ENCODE measurements at regions of chr11 and their contacts with region 1.

Region 1: GRCh38 chr11:130131961-130132850 is 27.4 kb upstream of the ST14 start:
- DNase-seq: peak; percentile 37
- H3K4me3 ChIP-seq: no peak overlapping the region
- H3K27ac ChIP-seq: no peak overlapping the region
- H3K27me3 ChIP-seq: no peaks in the 10 kb centered on the region
- CTCF ChIP-seq: peak; percentile 88

Region 2: GRCh38 chr11:129881570-129882170 is 250.5 kb before region 1 on chr11:
- CTCF ChIA-PET with region 1: interaction called, 43 read pairs
- POLR2A ChIA-PET with region 1: interaction called, 5 read pairs
- DNase-seq: no peak
- H3K4me3 ChIP-seq: no peak overlapping the region
- H3K27ac ChIP-seq: no peak overlapping the region
- H3K27me3 ChIP-seq: no peaks in the 10 kb centered on the region
- CTCF ChIP-seq: peak; percentile 70

Region 3: GRCh38 chr11:129911298-129911697 is 220.9 kb before region 1 on chr11:
- CTCF ChIA-PET with region 1: interaction called, 395 read pairs
- POLR2A ChIA-PET with region 1: no interaction called
- DNase-seq: no peak
- H3K4me3 ChIP-seq: no peak overlapping the region
- H3K27ac ChIP-seq: no peak overlapping the region
- H3K27me3 ChIP-seq: no peaks in the 10 kb centered on the region
- CTCF ChIP-seq: no peak

Region 4: GRCh38 chr11:129935723-129936122 is 196.5 kb before region 1 on chr11:
- CTCF ChIA-PET with region 1: interaction called, 395 read pairs
- POLR2A ChIA-PET with region 1: no interaction called
- DNase-seq: no peak
- H3K4me3 ChIP-seq: no peak overlapping the region
- H3K27ac ChIP-seq: no peak overlapping the region
- H3K27me3 ChIP-seq: no peaks in the 10 kb centered on the region
- CTCF ChIP-seq: no peak

Region 5: DNA sequence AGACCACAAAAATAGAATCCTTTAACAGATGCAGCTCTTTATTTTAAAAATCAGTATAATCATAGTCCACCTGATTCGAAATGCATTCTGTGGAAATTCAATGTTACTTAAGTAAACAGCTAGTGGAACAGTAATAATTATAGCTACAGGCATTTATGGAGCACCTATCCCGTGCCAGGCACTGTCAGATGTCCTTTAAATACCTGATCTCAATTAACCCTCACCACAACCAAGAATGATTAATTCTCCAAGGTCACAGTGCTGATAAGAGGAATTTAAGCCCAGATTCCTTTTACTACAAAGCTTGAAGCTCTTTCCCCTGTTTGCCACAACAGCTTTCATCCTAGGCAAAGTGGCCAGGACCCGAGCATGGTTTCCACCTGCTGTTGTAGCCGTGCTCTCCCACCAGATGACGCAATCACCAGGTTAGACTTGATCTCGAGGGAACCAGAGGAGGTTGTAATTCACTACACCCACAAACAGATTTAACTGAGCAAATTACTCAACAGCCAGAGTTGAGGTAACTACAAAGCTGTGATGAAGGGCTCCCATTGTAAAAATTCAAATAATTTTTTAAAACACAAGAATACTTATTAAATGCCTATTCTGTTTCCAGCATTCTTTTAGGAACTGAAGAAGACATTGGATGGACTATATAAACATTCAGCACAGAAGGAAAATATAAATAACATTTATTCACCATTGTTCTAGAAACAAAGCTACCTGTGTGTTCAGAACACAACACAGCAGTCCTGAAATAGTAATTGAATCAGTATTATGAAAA is 139.9 kb before region 1 on chr11:
- CTCF ChIA-PET with region 1: interaction called, 12 read pairs
- POLR2A ChIA-PET with region 1: interaction called, 4 read pairs
- DNase-seq: no peak
- H3K4me3 ChIP-seq: no peak overlapping the region
- H3K27ac ChIP-seq: no peak overlapping the region
- H3K27me3 ChIP-seq: no peaks in the 10 kb centered on the region
- CTCF ChIP-seq: no peak

Region 6: DNA sequence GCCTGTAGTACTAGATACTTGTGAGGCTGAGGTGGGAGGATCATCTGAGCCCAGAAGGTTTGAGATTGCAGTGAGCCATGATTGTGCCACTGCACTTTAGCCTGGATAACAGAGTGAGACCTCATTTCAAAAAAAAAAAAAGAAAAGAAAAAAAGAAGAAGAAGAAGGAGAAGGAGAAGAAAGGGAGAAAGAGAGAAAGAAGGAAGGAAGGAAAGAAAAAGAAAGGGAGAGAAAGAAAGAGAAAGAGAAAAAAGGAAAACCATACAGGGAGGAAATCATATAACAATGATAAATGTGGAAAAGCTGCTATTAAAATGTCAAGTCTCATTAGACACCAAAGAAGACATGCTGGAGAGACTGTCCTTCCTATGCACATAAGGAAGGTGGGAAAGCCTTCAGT is 123.9 kb before region 1 on chr11:
- CTCF ChIA-PET with region 1: interaction called, 16 read pairs
- POLR2A ChIA-PET with region 1: interaction called, 19 read pairs
- DNase-seq: no peak
- H3K4me3 ChIP-seq: no peak overlapping the region
- H3K27ac ChIP-seq: no peak overlapping the region
- H3K27me3 ChIP-seq: no peaks in the 10 kb centered on the region
- CTCF ChIP-seq: no peak

Region 7: DNA sequence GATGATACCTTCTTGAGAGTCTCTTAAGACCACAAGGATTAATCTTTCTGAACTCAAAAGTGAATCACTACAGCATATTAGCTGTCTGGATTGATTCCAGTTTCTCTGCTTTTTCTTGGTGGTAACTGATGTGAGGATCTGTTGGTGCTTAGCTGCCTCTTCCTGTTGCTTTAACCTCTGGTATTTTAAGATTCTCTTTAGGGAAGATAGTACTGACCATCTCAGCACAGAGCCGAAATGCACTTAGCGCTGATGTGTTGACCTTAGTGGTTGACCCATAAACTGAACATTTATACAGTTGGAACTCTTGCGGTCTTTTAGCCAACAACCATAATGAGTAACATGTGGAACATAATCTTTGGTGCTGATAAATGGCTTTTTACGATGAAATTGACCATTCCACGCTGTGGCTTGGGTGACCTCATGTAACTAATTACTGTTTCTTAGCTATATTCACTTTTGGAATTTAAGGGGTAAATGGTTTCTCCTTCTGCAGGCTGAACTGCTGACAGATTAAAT is 28.9 kb before region 1 on chr11:
- CTCF ChIA-PET with region 1: interaction called, 14 read pairs
- POLR2A ChIA-PET with region 1: no interaction called
- DNase-seq: peak; percentile 79
- H3K4me3 ChIP-seq: no peak overlapping the region
- H3K27ac ChIP-seq: no peak overlapping the region
- H3K27me3 ChIP-seq: peaks cover 33% of the 10 kb centered on the region
- CTCF ChIP-seq: no peak

Region 8: GRCh38 chr11:130171534-130171933 is 39.3 kb after region 1 on chr11:
- CTCF ChIA-PET with region 1: no interaction called
- POLR2A ChIA-PET with region 1: no interaction called
- DNase-seq: no peak
- H3K4me3 ChIP-seq: no peak overlapping the region
- H3K27ac ChIP-seq: no peak overlapping the region
- H3K27me3 ChIP-seq: peaks cover 7% of the 10 kb centered on the region
- CTCF ChIP-seq: no peak

Region 9: GRCh38 chr11:130278151-130278550 is 145.9 kb after region 1 on chr11:
- CTCF ChIA-PET with region 1: no interaction called
- POLR2A ChIA-PET with region 1: no interaction called
- DNase-seq: no peak
- H3K4me3 ChIP-seq: no peak overlapping the region
- H3K27ac ChIP-seq: no peak overlapping the region
- H3K27me3 ChIP-seq: no peaks in the 10 kb centered on the region
- CTCF ChIP-seq: no peak

Measured in AG04450 (cell line).